ENCODE measurements at regions of chr22 and their contacts with region 1.

Region 1: DNA sequence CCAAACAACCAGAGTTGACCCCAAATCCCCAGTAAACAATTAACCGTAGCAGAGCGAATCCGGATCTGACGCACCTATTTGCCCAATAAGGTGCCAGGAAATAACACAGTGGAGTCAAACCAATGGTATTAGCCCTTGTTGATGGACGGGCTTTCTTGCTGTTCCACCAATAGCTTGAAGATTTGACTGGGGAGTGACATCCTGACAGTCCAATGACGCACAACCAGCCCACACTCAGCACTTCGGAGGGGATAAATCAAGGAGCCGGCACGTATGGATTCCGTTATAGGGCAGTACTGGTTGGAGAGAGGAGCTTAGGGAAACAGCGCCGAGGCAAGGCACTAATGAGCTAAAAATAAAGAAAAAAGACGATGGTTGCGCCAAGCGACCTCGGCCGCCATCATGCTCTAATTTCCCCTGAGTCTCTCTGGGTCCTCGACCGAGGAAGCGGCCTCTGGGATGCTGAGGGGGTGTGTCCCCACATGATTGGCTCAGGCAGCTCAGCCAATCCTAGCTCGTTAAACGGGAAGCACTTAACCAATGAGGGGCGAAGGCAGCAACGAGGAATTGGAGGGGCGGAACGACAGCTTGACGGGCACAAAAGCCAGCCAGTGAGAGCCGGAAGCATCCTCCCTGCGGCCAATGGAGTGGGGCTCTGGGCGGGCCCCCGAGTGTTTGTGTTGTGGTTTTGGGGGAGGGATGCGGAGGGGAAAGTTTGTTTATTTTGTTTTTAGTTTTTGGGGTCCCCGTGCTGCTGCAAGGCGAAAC is 49.5 kb downstream of the FAM83F start:
- DNase-seq: peak; percentile 97
- ATAC-seq: peak; percentile 95

Region 2: DNA sequence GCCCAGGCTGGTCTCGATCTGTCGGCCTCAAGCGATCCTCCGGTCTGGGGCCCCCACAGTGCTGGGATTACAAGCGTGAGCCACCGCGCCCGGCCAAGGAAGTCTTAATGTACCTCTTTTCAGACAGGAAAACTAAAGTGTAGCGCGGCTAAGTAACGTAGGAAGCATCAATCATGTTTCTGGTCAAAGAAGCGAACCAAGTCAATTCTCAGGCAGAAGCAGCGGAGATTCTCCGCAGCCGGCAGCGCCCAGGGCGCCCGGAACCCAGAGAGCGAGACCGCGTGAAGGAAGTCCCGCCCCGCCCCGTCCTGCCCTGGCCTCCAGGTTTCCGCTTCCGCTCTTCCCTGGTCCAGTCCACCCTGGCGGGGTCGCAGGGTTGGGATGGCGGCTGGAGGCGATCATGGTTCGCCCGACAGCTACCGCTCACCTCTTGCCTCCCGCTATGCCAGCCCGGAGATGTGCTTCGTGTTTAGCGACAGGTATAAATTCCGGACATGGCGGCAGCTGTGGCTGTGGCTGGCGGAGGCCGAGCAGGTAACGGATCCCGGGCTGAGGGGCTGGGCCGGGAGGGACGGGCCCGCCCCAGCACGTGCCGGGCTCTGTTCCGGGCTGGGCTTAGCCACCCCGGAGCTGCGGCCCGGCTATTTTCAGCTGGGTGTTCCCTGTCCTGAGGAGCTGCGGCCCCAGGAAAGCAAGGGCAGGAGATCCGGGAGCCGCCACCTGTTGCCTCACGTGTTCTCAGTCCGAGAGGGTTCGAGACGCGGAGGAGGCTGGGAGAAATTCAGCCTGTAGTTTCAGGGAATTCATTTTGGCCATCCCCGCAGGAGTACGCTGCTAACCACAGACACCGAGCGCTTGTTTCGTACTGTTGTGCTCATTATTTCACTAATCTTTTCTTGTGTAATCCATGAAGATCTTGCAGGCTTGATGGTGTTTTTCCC is 302.2 kb after region 1 on chr22 and contains the start of gene ADSL:
- intact Hi-C with region 1: loop called (anchors 2 kb)
- DNase-seq: peak; percentile 94
- ATAC-seq: peak; percentile 98
- total RNA-seq, gene ADSL: 55.3 TPM

Measured in Right ventricle myocardium inferior (tissue), 1 donor.